GM12878 (cell line): ENCODE measurements at regions of chr6 and their contacts with region 1.

Region 1: GRCh38 chr6:13487122-13488014 is at the start of gene GFOD1:
- DNase-seq: no peak
- ATAC-seq: peak; percentile 80
- H3K4me3 ChIP-seq: peak within 1 kb of the TSS; percentile 100
- H3K27ac ChIP-seq: peak within 1 kb of the TSS; percentile 69
- H3K4me1 ChIP-seq: peaks cover 15% of the 10 kb centered on the region
- H3K27me3 ChIP-seq: no peaks in the 10 kb centered on the region
- CTCF ChIP-seq: no peak
- EP300 ChIP-seq: no peak
- POLR2A ChIP-seq: peak; percentile 86
- RAD21 ChIP-seq: no peak
- polyA plus RNA-seq, gene GFOD1: 6.5 to 7.9 TPM

Region 2: GRCh38 chr6:13355043-13355951 is 132.1 kb before region 1 on chr6:
- CTCF ChIA-PET with region 1: interaction called, 5 read pairs
- POLR2A ChIA-PET with region 1: interaction called, 5 read pairs
- RAD21 ChIA-PET with region 1: interaction called, 17 read pairs
- SMC1A ChIA-PET with region 1: interaction called, 9 read pairs
- in situ Hi-C with region 1: no loop called
- intact Hi-C with region 1: no loop called
- DNase-seq: peak; percentile 66
- ATAC-seq: peak; percentile 79
- H3K4me3 ChIP-seq: peak overlapping the region; percentile 58
- H3K27ac ChIP-seq: peak overlapping the region; percentile 94
- H3K4me1 ChIP-seq: peaks cover 36% of the 10 kb centered on the region
- H3K27me3 ChIP-seq: no peaks in the 10 kb centered on the region
- CTCF ChIP-seq: no peak
- EP300 ChIP-seq: 0 out of 4 replicates have a peak, but pooled peaks of 1 of the 2 experiments have one; percentile 25
- POLR2A ChIP-seq: no peak
- RAD21 ChIP-seq: no peak

Region 3: GRCh38 chr6:13383328-13384163 is 103.8 kb before region 1 on chr6:
- CTCF ChIA-PET with region 1: interaction called, 8 read pairs
- POLR2A ChIA-PET with region 1: interaction called, 11 read pairs
- RAD21 ChIA-PET with region 1: interaction called, 14 read pairs
- SMC1A ChIA-PET with region 1: interaction called, 29 read pairs
- in situ Hi-C with region 1: no loop called
- intact Hi-C with region 1: loop called (anchors 2 kb)
- DNase-seq: peak; percentile 91
- ATAC-seq: peak; percentile 98
- H3K4me3 ChIP-seq: no peak overlapping the region
- H3K27ac ChIP-seq: peak overlapping the region; percentile 93
- H3K4me1 ChIP-seq: peaks cover 45% of the 10 kb centered on the region
- H3K27me3 ChIP-seq: no peaks in the 10 kb centered on the region
- CTCF ChIP-seq: peak; percentile 40 to 67 (median 48); a peak in 5 of 6 replicates
- EP300 ChIP-seq: peak in 1 of 2 experiments; percentile 54; a peak in 2 of 4 replicates
- POLR2A ChIP-seq: no peak
- RAD21 ChIP-seq: peak; percentile 83

Region 4: DNA sequence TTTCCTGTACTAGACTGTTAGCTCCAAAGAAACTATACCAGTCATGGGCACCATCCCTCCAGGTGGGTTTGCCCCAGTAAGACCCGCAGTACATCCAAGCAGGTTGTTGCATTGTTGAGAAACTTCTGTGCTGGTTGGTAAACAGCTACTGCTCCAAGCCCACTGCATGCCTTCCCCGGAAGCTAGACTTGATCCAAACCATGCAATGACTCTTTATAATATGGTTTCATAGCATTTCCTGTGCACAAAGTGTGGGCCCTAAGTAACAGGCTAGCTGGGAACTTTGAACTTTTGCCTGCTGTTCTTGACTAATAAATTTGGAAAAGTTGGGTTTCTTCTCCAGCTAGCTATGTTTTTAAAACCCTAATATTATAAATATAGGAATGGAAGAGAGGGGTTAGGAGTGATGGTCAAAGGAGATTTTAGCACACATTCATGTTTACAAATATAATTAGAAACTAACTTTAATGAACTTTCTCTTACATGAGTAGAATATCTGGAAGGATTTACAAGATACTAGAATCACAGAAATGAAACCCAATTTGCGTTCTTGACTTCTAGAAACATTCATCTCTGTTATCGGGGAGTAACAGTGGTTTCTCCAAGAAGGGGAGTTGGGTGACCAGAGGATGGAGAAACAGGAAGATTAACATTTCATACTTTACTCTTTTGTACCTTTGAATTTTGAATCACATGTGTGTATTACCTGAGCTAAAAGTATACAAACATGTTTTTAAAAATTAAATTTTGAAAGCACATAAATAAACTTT is 51.7 kb before region 1 on chr6:
- CTCF ChIA-PET with region 1: interaction called, 24 read pairs
- POLR2A ChIA-PET with region 1: interaction called, 68 read pairs
- RAD21 ChIA-PET with region 1: interaction called, 193 read pairs
- SMC1A ChIA-PET with region 1: interaction called, 181 read pairs
- in situ Hi-C with region 1: no loop called
- intact Hi-C with region 1: no loop called
- DNase-seq: no peak
- ATAC-seq: no peak
- H3K4me3 ChIP-seq: no peak overlapping the region
- H3K27ac ChIP-seq: peak overlapping the region; percentile 35; the same call in 1 of the 2 replicates
- H3K4me1 ChIP-seq: peaks cover 44% of the 10 kb centered on the region
- H3K27me3 ChIP-seq: no peaks in the 10 kb centered on the region
- CTCF ChIP-seq: no peak
- EP300 ChIP-seq: no peak
- POLR2A ChIP-seq: no peak
- RAD21 ChIP-seq: no peak

Region 5: GRCh38 chr6:13466304-13467215 is 20.8 kb before region 1 on chr6:
- CTCF ChIA-PET with region 1: interaction called, 8 read pairs
- POLR2A ChIA-PET with region 1: interaction called, 8 read pairs
- RAD21 ChIA-PET with region 1: interaction called, 10 read pairs
- SMC1A ChIA-PET with region 1: interaction called, 55 read pairs
- in situ Hi-C with region 1: no loop called
- intact Hi-C with region 1: no loop called
- DNase-seq: no peak
- ATAC-seq: peak; percentile 73
- H3K4me3 ChIP-seq: no peak overlapping the region
- H3K27ac ChIP-seq: peak overlapping the region; percentile 41; the same call in 1 of the 2 replicates
- H3K4me1 ChIP-seq: peaks cover 46% of the 10 kb centered on the region
- H3K27me3 ChIP-seq: no peaks in the 10 kb centered on the region
- CTCF ChIP-seq: no peak
- EP300 ChIP-seq: no peak
- POLR2A ChIP-seq: no peak
- RAD21 ChIP-seq: no peak

Region 6: DNA sequence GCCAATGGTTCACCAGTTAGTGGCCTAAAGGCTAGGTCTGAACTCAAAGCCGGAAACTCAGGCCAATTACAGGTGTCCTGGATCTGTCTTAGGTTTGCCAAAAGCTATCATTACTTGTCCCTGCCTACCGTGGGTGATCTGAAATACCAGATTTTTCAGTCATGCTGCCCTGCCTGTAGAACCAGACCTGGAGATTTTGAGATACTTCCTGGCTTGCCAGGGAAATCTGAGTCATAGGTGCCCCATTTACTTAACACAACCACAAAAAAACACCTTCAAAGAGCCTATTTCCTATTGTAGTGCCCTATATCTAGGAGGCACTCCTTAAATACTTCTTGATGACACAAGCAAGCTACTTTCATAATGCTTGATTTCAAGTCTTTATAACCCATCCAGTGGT is 238.2 kb after region 1 on chr6:
- CTCF ChIA-PET with region 1: no interaction called
- POLR2A ChIA-PET with region 1: no interaction called
- RAD21 ChIA-PET with region 1: no interaction called
- SMC1A ChIA-PET with region 1: no interaction called
- in situ Hi-C with region 1: no loop called
- intact Hi-C with region 1: no loop called
- DNase-seq: no peak
- ATAC-seq: no peak
- H3K4me3 ChIP-seq: no peak overlapping the region
- H3K27ac ChIP-seq: no peak overlapping the region
- H3K4me1 ChIP-seq: no peaks in the 10 kb centered on the region
- H3K27me3 ChIP-seq: no peaks in the 10 kb centered on the region
- CTCF ChIP-seq: no peak
- EP300 ChIP-seq: no peak
- POLR2A ChIP-seq: no peak
- RAD21 ChIP-seq: no peak

Region 7: DNA sequence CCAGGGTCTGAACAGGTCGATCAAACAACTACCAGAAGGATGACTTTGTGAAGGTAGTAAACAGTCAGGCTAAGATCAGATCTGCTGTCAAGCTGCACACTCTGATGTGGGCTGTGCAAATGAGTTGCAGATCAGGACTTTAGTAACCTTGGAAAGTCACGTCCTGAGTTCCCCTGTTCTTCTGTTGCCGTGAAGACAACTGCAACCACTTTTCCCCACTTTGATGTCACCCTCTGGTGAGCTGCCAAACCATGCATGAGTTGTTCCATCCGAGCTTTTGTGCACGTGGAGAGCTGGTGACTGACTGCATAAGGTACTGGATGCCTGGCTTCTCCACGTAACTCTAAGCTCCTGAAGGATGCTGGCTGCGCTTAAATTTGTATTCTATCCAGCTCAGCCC is 741.2 kb after region 1 on chr6:
- CTCF ChIA-PET with region 1: no interaction called
- POLR2A ChIA-PET with region 1: no interaction called
- RAD21 ChIA-PET with region 1: no interaction called
- SMC1A ChIA-PET with region 1: no interaction called
- in situ Hi-C with region 1: no loop called
- intact Hi-C with region 1: no loop called
- DNase-seq: no peak
- ATAC-seq: no peak
- H3K4me3 ChIP-seq: no peak overlapping the region
- H3K27ac ChIP-seq: no peak overlapping the region
- H3K4me1 ChIP-seq: no peaks in the 10 kb centered on the region
- H3K27me3 ChIP-seq: no peaks in the 10 kb centered on the region
- CTCF ChIP-seq: no peak
- EP300 ChIP-seq: no peak
- POLR2A ChIP-seq: no peak
- RAD21 ChIP-seq: no peak